AG04449 (cell line): ENCODE measurements at regions of chr19 and their contacts with region 1.

Region 1: DNA sequence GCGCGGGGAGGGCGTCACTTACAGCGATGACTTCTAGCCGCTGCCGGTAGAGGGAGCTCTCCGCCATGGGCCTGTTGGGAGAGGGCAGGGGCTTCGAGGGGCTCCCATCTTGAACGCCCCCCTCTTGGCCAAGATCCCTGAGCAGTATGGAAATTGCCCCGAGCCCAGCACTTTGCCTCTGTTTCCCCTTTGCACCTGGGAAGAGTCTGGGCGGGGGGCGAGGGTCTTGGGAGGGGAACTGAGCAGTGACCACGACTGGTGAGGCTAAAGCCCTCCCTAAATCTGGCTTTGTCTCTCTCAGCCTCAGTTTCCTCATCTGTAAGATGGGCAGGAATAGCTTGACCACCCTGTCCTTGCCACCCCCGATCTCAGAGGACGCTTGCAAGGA is 2.8 kb downstream of the PALM3 start:
- DNase-seq: no peak
- H3K4me3 ChIP-seq: no peak overlapping the region
- CTCF ChIP-seq: peak; percentile 74

Region 2: DNA sequence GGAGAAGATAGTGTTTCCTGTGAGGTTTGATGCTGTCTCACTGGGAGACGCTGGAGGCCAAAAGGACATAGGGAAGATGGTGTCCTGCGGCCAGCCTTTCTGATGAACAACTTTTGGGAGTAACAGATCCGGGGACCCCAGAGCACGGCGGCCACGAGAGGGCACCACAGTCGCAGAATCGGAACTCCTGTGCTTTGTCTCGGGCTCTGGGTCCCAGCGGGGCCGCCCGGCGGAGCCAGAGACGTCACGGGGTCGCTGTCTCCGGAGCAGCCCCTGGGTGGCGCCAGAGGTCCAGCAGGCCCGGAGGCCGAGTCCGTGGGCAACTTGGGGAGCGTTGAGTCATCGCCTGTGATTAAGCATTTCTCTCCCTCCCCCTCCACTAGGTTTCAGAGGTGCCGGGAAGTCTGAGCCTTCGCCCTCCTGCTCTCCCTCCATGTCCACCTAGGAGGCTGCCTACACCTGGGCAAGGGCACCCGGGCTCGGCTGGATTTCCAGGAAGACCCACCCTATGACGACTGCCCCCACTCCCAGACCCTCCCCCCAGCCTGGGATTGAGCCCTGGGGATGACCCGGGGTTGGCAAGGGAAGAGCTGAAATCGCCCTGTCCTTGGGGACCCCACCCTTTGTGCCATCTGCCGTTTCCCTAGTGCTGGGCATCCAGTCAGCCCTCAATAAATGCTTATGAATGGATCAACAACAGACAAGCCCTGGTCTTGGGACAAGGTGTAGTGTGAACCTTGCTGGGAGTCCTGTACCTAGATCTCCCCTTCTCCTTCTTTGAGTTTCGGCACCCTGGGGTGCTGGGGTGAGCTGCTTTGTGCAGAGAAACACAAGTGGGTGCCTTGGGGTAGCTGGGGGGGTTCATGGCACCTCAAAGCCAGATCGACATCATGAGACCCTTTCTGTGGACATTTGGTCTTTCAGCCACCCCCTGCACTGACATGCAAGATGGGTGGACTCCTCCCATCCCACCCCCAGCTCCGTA is 178.7 kb before region 1 on chr19:
- CTCF ChIA-PET with region 1: interaction called, 22 read pairs
- POLR2A ChIA-PET with region 1: no interaction called
- DNase-seq: peak; percentile 51
- H3K4me3 ChIP-seq: peak overlapping the region; percentile 31
- CTCF ChIP-seq: peak; percentile 95

Region 3: GRCh38 chr19:13905938-13906904 is 152.9 kb before region 1 on chr19 and contains the starts of genes BRME1 and CC2D1A:
- CTCF ChIA-PET with region 1: interaction called, 10 read pairs
- POLR2A ChIA-PET with region 1: no interaction called
- DNase-seq: no peak
- H3K4me3 ChIP-seq: peak within 1 kb of the TSS; percentile 87
- CTCF ChIP-seq: no peak

Region 4: DNA sequence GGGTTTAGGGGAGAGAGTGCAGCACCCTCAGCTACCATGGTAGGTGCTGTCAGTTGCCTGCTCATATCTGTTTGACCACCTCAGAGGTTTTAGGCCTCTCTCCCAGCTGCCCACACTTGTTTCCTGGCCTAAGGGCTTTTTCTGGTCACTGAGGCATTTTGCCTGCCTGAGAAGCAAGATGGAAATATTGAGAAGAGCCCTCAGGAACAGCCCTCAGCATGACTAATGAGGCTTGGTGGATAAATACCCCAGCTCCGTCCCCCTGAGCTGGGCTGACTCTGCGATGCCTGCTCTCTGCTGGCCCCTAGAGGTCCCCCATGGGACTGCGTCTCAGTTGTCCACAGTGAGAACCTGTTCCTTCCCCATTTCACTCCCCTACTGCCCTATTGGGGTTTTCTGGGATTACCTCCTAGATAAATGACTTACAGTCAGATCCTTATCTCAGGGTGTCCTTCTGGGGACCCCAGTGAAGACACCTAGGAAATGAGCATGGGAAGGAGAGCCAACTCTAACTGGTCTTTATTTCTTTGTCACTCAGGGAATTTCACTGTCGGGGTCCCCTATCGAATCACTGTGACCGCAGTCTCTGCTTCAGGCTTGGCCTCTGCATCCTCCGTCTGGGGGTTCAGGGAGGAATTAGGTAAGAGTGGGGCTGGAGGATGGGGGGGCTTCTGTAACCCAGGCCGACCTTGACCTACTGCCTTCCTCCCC is 10.5 kb before region 1 on chr19:
- CTCF ChIA-PET with region 1: interaction called, 106 read pairs
- POLR2A ChIA-PET with region 1: no interaction called
- DNase-seq: no peak
- H3K4me3 ChIP-seq: no peak overlapping the region
- CTCF ChIP-seq: peak; percentile 67